ENCODE measurements at regions of chr14 and their contacts with region 1.

Region 1: GRCh38 chr14:60164712-60165546 is at the start of gene DHRS7:
- DNase-seq: peak; percentile 83 to 89
- H3K4me3 ChIP-seq: peak within 1 kb of the TSS; percentile 78
- H3K4me3 Mint-ChIP-seq: peak within 1 kb of the TSS; percentile 94
- H3K27ac Mint-ChIP-seq: peak within 1 kb of the TSS; percentile 84
- H3K4me1 ChIP-seq: no peaks in the 10 kb centered on the region
- H3K4me1 Mint-ChIP-seq: no peaks in the 10 kb centered on the region
- H3K27me3 ChIP-seq: no peaks in the 10 kb centered on the region
- H3K27me3 Mint-ChIP-seq: no peaks in the 10 kb centered on the region
- CTCF ChIP-seq: peak; percentile 15 to 26
- total RNA-seq, gene DHRS7: 61.6 and 65.6 TPM in 2 replicates

Region 2: DNA sequence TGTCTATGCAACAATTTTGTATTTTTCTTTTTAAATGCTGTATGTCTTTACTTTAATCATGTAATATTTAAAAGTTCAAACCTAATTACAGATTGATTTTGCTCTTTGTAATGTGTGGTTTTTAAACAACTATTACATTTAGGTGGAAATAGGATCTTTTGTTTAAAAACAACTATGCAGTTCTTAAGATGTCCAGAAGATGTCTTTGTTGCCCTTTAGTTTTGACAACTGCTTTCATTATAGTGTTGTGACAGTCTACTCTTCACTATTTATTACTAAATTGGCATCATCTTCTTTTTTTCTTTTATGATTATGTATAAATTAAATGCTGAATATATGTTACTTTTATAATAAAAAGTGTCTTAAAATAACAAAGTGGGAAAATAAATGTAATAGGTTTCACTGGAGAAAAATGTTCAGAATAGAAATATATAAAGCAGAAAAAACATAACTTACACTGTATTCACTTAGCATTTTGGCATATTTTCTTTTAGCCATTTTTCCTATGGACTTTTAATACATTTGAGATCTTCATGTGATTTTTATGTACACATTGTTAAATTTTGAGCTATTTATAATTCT is 100.3 kb before region 1 on chr14:
- CTCF ChIA-PET with region 1: interaction called, 3 read pairs
- POLR2A ChIA-PET with region 1: interaction called, 3 read pairs
- intact Hi-C with region 1: loop called (anchors 5 kb)
- DNase-seq: no peak
- H3K4me3 ChIP-seq: no peak overlapping the region
- H3K4me3 Mint-ChIP-seq: no peak overlapping the region
- H3K27ac Mint-ChIP-seq: no peak overlapping the region
- H3K4me1 ChIP-seq: no peaks in the 10 kb centered on the region
- H3K4me1 Mint-ChIP-seq: no peaks in the 10 kb centered on the region
- H3K27me3 ChIP-seq: no peaks in the 10 kb centered on the region
- H3K27me3 Mint-ChIP-seq: no peaks in the 10 kb centered on the region
- CTCF ChIP-seq: peak; percentile 31 to 58

Region 3: GRCh38 chr14:60116181-60116580 is 48.7 kb before region 1 on chr14:
- CTCF ChIA-PET with region 1: no interaction called
- POLR2A ChIA-PET with region 1: no interaction called
- intact Hi-C with region 1: no loop called
- DNase-seq: no peak
- H3K4me3 ChIP-seq: no peak overlapping the region
- H3K4me3 Mint-ChIP-seq: no peak overlapping the region
- H3K27ac Mint-ChIP-seq: no peak overlapping the region
- H3K4me1 ChIP-seq: no peaks in the 10 kb centered on the region
- H3K4me1 Mint-ChIP-seq: no peaks in the 10 kb centered on the region
- H3K27me3 ChIP-seq: no peaks in the 10 kb centered on the region
- H3K27me3 Mint-ChIP-seq: no peaks in the 10 kb centered on the region
- CTCF ChIP-seq: no peak

Measured in Caco-2 (cell line).